Astrocyte of the cerebellum (primary cell): ENCODE measurements at regions of chr4 and their contacts with region 1.

Region 1: DNA sequence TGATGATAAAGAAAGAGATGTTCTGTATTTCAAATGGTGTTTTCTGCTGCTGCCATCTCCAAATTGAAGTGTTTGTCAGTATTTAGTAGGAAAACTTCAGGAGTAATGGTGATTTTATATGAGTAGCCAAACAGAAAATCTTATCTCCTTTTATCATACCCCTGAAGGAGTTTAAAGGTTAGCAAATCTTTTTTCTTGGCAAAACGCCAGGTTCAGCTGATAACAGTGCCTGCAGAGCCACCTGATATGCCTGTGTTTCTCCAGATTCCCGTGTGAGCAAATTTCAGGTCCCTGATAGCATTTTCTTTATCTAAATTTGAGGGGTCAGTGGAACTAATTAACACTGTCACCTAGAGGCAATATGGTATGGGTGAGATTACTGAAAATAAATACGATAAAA is 65.8 kb upstream of the ETNPPL start:
- DNase-seq: no peak
- H3K4me3 ChIP-seq: no peak overlapping the region
- CTCF ChIP-seq: no peak

Region 2: DNA sequence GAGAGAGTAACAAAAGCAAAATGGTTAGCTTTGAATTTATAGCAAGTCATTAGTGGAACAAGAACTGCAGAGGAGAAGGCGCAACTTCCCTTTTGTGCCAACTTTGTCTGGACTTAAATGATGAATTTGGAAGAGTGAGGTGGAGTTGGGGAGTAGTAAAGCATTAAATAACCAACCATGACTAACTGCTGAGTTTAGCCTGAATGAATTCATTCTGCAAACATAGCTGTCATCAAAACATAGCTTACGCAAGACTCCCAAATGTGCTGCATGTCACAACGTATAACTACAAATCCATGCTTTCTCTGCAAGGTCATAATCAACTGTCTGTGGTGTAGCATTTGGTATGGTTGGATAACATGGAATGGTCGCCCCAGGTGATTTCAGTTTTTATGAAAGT is 284.1 kb before region 1 on chr4:
- in situ Hi-C with region 1: no loop called
- DNase-seq: no peak
- H3K4me3 ChIP-seq: no peak overlapping the region
- CTCF ChIP-seq: no peak

Region 3: GRCh38 chr4:109411964-109412363 is 583.3 kb after region 1 on chr4:
- in situ Hi-C with region 1: loop called (anchors 5 kb)
- DNase-seq: no peak
- H3K4me3 ChIP-seq: no peak overlapping the region
- CTCF ChIP-seq: no peak